PC-9 (cell line): ENCODE measurements at regions of chr15 and their contacts with region 1.

Region 1: GRCh38 chr15:42558739-42559138 is 10.1 kb downstream of the HAUS2 start:
- DNase-seq: no peak
- H3K4me3 ChIP-seq: no peak overlapping the region
- H3K27ac ChIP-seq: no peak overlapping the region
- H3K4me1 ChIP-seq: no peaks in the 10 kb centered on the region
- H3K27me3 ChIP-seq: no peaks in the 10 kb centered on the region
- CTCF ChIP-seq: no peak

Region 2: GRCh38 chr15:42338500-42338899 is 220.2 kb before region 1 on chr15:
- CTCF ChIA-PET with region 1: no interaction called
- POLR2A ChIA-PET with region 1: interaction called, 16 read pairs
- intact Hi-C with region 1: no loop called
- DNase-seq: no peak
- H3K4me3 ChIP-seq: no peak overlapping the region
- H3K27ac ChIP-seq: no peak overlapping the region
- H3K4me1 ChIP-seq: no peaks in the 10 kb centered on the region
- H3K27me3 ChIP-seq: no peaks in the 10 kb centered on the region
- CTCF ChIP-seq: no peak

Region 3: GRCh38 chr15:42413920-42414319 is 144.8 kb before region 1 on chr15:
- CTCF ChIA-PET with region 1: no interaction called
- POLR2A ChIA-PET with region 1: no interaction called
- intact Hi-C with region 1: no loop called
- DNase-seq: no peak
- H3K4me3 ChIP-seq: no peak overlapping the region
- H3K27ac ChIP-seq: no peak overlapping the region
- H3K4me1 ChIP-seq: no peaks in the 10 kb centered on the region
- H3K27me3 ChIP-seq: no peaks in the 10 kb centered on the region
- CTCF ChIP-seq: no peak

Region 4: GRCh38 chr15:42495361-42496212 is 63.2 kb before region 1 on chr15 and contains the start of gene SNAP23:
- CTCF ChIA-PET with region 1: no interaction called
- POLR2A ChIA-PET with region 1: no interaction called
- intact Hi-C with region 1: no loop called
- DNase-seq: peak; percentile 83 to 94
- H3K4me3 ChIP-seq: peak within 1 kb of the TSS; percentile 77
- H3K27ac ChIP-seq: peak within 1 kb of the TSS; percentile 67
- H3K4me1 ChIP-seq: peaks cover 35% of the 10 kb centered on the region
- H3K27me3 ChIP-seq: no peaks in the 10 kb centered on the region
- CTCF ChIP-seq: no peak
- total RNA-seq, gene SNAP23: 47.1 and 65.8 TPM in 2 replicates

Region 5: DNA sequence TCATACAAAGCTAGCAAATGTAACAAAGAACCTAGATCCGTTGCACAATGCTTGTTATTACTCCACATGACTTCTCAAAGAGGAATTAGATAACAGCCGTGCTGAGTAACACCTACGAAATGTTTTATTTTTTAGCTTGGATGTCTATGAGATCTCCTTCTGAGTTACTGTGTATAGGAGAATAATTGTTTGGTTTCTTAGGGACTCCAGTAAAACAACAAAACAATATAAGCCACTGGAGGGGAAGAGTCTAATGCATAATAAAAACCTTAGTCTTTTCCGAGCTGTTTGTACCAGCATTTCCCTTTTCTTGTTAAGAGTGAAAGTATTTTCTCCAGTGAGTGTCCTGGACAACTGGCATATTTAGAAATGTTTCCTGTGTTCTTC is 47.7 kb before region 1 on chr15:
- CTCF ChIA-PET with region 1: no interaction called
- POLR2A ChIA-PET with region 1: interaction called, 11 read pairs
- intact Hi-C with region 1: no loop called
- DNase-seq: peak in 1 of 2 experiments; percentile 66
- H3K4me3 ChIP-seq: no peak overlapping the region
- H3K27ac ChIP-seq: no peak overlapping the region
- H3K4me1 ChIP-seq: no peaks in the 10 kb centered on the region
- H3K27me3 ChIP-seq: no peaks in the 10 kb centered on the region
- CTCF ChIP-seq: no peak